CD4-positive, alpha-beta T cell (primary cell): ENCODE measurements at regions of chr19 and their contacts with region 1.

Region 1: DNA sequence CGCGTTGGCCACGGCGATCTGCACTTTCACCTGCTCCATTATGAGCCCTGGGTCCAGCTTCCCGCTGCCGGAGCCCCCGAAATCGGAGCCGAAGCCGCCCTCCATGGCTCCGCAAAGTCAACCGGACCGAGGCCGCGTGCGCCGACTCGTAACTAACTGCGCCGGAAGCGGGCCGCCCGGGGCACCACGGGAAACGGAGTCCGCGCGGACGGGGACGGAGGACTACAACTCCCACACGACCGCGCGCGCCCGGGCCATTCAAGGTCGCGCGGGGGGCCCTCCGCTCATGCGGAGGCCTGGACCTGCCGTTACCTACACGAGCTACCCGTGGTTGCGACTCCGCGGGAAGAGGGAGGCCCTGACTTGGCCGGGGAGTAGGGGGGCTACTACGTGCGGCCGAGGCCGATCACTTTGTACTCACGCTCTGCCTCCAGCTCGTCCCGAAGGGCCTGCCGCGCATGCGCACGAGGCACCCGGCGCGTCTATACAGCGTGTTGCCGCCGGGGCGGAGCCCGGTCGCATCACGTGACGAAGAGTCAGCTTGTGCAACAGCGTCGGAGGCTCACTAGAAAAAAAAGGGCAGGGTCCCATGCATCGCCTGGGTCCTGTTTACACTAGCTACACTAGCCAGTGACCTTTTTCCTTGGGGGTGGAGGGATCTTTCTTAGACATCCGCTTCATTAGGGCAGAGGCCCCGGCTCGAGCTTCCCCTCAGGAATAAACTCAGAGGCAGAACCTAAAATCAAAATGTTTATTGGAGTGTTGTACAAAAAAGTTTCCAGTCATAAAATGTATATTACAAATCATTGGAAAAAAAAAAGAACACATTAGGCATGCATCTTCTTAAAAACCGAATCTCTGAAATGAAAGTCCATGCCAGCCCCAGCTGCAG is at the start of gene TIMM13:
- DNase-seq: peak; percentile 92 to 99 (median 96)
- ATAC-seq: peak; percentile 93
- H3K4me3 ChIP-seq: peak within 1 kb of the TSS; percentile 86
- H3K4me3 Mint-ChIP-seq: peak within 1 kb of the TSS; percentile 92
- H3K27ac ChIP-seq: peak within 1 kb of the TSS; percentile 91 to 98
- H3K27ac Mint-ChIP-seq: peak within 1 kb of the TSS; percentile 93
- H3K4me1 ChIP-seq: peaks cover 31% of the 10 kb centered on the region
- H3K4me1 Mint-ChIP-seq: peaks cover 15% of the 10 kb centered on the region
- H3K27me3 ChIP-seq: no peaks in the 10 kb centered on the region
- H3K27me3 Mint-ChIP-seq: no peaks in the 10 kb centered on the region
- CTCF ChIP-seq: no peak
- total RNA-seq, gene TIMM13: 17.3 to 22.3 TPM

Region 2: GRCh38 chr19:2328401-2329148 is 99.1 kb before region 1 on chr19 and contains the starts of genes LSM7 and SPPL2B:
- CTCF ChIA-PET with region 1: no interaction called
- POLR2A ChIA-PET with region 1: interaction called, 5 read pairs
- intact Hi-C with region 1: loop called in 1 of 2 experiments (anchors 5 kb)
- DNase-seq: peak; percentile 86 to 98 (median 92)
- ATAC-seq: peak; percentile 69
- H3K4me3 ChIP-seq: peak within 1 kb of the TSS; percentile 96
- H3K4me3 Mint-ChIP-seq: peak within 1 kb of the TSS; percentile 100
- H3K27ac ChIP-seq: peak within 1 kb of the TSS; percentile 57 to 78
- H3K27ac Mint-ChIP-seq: peak within 1 kb of the TSS; percentile 93
- H3K4me1 ChIP-seq: peaks cover 70% of the 10 kb centered on the region
- H3K4me1 Mint-ChIP-seq: peaks cover 74% of the 10 kb centered on the region
- H3K27me3 ChIP-seq: no peaks in the 10 kb centered on the region
- H3K27me3 Mint-ChIP-seq: no peaks in the 10 kb centered on the region
- CTCF ChIP-seq: no peak
- total RNA-seq, gene LSM7: 73.6 to 80.1 TPM
- total RNA-seq, gene SPPL2B: 106 to 111 TPM

Region 3: DNA sequence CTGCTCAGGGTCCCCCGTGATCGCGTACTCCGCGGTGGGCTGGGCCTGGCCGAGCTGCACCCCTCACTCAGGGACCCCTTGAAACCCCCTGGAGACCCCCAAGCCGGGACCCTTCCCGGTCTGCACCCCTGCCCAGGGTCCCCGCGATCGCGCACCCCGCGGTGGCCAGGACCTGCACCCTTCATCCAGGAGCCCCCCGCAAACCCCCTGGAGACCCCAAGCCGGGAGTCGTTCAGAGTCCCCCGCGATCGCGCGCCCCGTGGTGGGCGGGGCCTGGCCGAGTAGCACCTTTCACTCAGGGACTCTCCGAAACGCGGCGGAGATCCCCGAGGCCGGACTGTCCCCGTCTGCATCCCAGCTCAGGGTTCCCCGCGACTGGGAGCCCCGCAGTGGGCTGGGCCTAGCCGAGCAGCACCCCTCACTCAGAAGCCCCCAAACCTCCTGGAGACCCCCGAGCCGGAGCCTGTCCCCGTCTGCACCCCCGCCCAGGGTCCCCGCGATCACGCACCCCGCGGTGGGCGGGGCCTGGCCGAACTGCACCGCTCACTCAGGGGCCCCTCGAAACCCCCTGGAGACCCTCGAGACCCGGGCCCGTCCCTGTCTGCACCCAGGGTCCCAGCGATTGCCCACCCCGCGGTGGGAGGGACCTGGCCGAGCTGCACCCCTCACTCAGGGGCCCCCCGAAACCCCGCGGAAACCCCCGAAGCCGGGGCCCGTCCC is 28.3 kb after region 1 on chr19:
- CTCF ChIA-PET with region 1: interaction called, 3 read pairs
- POLR2A ChIA-PET with region 1: interaction called, 36 read pairs
- intact Hi-C with region 1: loop called in 1 of 2 experiments (anchors 1 kb)
- DNase-seq: peak in 9 of 14 experiments; percentile 19 to 83 (median 42)
- ATAC-seq: peak; percentile 33
- H3K4me3 ChIP-seq: peak overlapping the region; percentile 74
- H3K4me3 Mint-ChIP-seq: peak overlapping the region; percentile 85
- H3K27ac ChIP-seq: no peak overlapping the region
- H3K27ac Mint-ChIP-seq: peak overlapping the region; percentile 30
- H3K4me1 ChIP-seq: peaks cover 25% of the 10 kb centered on the region
- H3K4me1 Mint-ChIP-seq: peaks cover 13% of the 10 kb centered on the region
- H3K27me3 ChIP-seq: no peaks in the 10 kb centered on the region
- H3K27me3 Mint-ChIP-seq: no peaks in the 10 kb centered on the region
- CTCF ChIP-seq: no peak